Activated naive CD4-positive, alpha-beta T cell treated with anti-CD3 and anti-CD28 coated beads for 36 hours (primary cell): ENCODE measurements at regions of chr10 and their contacts with region 1.

Region 1: DNA sequence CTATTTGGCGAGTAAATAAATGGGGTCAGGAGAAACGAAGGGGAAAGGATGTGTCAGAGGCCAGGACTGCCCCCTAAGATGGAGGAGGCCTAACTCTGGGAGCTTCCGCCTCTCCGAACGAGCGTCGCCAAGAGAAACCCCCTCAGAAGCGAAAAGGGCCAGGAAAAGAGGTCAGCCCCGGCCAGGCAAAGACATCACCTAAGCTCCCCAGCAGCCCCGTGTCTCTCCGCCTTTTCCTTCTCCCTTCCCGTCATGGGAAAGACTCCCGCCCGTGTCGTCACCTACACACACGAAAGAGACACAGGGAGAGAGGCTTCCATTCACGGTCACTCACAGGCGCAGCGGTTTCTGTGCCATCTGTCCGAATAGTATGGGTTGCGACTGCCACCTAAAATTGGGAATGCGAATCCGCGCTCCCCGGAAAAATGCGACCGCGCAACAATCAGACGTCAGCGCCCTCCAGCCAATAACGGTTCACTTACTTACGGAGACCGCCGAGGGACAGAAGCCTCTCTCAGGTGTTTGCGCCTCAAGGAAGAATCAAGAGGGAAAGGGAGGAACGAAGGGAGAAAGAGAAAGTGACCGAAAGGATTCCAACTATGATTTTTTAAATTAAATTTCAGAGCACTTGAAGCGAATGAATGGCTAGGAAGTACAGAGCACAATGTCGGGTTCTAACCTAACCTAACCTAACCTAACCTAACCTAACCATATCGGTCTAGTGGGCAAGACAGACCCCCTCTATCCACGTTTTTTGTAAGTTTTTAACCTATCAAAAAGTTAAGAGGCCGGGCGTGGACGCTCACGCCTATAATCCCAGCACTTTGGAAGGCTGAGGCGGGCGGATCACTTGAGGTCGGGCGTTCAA is at the start of gene CWF19L1:
- DNase-seq: peak; percentile 90
- H3K4me3 Mint-ChIP-seq: peak within 1 kb of the TSS; percentile 100
- H3K27ac Mint-ChIP-seq: peak within 1 kb of the TSS; percentile 97
- H3K4me1 Mint-ChIP-seq: peaks cover 29% of the 10 kb centered on the region
- H3K27me3 Mint-ChIP-seq: no peaks in the 10 kb centered on the region
- total RNA-seq, gene CWF19L1: 35.3 to 35.4 TPM

Region 2: GRCh38 chr10:99467236-99467999 is 800.1 kb before region 1 on chr10:
- CTCF ChIA-PET with region 1: no interaction called
- intact Hi-C with region 1: no loop called
- DNase-seq: no peak
- H3K4me3 Mint-ChIP-seq: no peak overlapping the region
- H3K27ac Mint-ChIP-seq: no peak overlapping the region
- H3K4me1 Mint-ChIP-seq: no peaks in the 10 kb centered on the region
- H3K27me3 Mint-ChIP-seq: peaks cover 26% of the 10 kb centered on the region

Region 3: DNA sequence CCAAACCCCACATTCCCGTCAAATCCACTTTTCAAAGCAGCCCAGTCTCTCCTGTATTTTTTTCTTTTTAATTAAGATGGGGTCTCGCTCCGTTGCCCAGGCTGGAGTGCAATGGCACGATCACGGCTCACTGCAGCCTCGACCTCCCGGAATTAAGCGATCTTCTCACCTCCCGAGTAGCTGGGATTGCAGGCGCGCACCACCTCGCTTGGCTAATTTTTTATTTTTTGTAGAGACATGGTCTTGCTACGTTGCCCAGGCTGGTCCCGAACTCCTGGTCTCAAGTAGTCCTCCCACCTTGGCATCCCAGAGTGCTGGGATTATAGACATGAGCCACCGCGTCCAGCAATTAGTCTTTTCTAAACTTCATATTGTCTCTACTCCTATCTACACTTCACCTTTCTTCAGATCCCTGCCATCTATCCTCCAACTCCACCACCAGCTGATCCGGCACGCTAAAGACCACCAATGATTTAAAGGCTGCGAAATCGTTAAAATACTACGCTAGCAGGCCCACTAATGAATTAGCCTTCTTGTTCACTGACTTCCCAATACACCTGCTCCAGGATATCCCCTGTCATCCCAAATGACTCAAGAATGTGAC is 37.5 kb before region 1 on chr10:
- CTCF ChIA-PET with region 1: interaction called, 3 read pairs
- intact Hi-C with region 1: loop called (anchors 1 kb)
- DNase-seq: no peak
- H3K4me3 Mint-ChIP-seq: peak overlapping the region; percentile 91
- H3K27ac Mint-ChIP-seq: peak overlapping the region; percentile 90
- H3K4me1 Mint-ChIP-seq: peaks cover 31% of the 10 kb centered on the region
- H3K27me3 Mint-ChIP-seq: no peaks in the 10 kb centered on the region